Activated CD4-positive, alpha-beta T cell treated with anti-CD3 and anti-CD28 coated beads for 36 hours (primary cell): ENCODE measurements at regions of chr14 and their contacts with region 1.

Region 1: GRCh38 chr14:55373784-55374705 is 37.6 kb downstream of the ATG14 start:
- DNase-seq: peak; percentile 39
- ATAC-seq: peak; percentile 88
- H3K4me3 Mint-ChIP-seq: peak overlapping the region; percentile 45
- H3K27ac Mint-ChIP-seq: peak overlapping the region; percentile 96
- H3K4me1 Mint-ChIP-seq: peaks cover 46% of the 10 kb centered on the region
- H3K27me3 Mint-ChIP-seq: no peaks in the 10 kb centered on the region

Region 2: DNA sequence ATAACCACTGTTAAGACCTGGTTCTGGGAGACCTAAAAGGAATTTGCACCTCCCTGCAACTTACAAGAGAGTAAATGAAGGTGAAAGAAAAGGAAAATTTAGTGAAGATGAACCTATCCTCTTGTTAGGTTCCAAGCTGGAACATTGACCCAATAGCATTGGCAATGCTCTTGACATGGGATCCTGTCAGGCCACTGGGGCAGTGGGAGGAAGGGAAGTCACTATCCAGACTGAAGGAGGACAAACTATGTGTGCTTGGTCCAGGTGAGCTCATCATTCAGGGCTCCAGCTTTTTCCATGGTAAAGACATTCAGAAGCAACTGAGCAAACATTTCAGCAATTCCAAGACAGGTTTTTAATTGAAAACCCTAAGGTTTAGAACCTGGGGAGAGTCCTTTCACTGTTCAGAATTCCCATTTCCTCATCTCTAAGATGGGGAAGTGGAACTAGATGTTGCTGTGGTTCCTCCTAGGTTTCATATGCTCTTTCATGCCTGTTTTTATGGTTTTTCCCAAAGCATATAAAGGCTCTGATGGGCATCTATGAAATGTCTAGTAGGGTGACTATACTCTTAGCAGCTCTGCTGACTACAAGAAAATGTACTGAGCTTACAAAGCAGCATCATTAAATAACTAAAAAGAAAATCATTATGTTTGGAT is 289.5 kb before region 1 on chr14:
- CTCF ChIA-PET with region 1: no interaction called
- POLR2A ChIA-PET with region 1: no interaction called
- intact Hi-C with region 1: no loop called
- DNase-seq: no peak
- ATAC-seq: no peak
- H3K4me3 Mint-ChIP-seq: no peak overlapping the region
- H3K27ac Mint-ChIP-seq: no peak overlapping the region
- H3K4me1 Mint-ChIP-seq: peaks cover 2% of the 10 kb centered on the region
- H3K27me3 Mint-ChIP-seq: no peaks in the 10 kb centered on the region

Region 3: GRCh38 chr14:55303691-55304145 is 70.3 kb before region 1 on chr14:
- CTCF ChIA-PET with region 1: no interaction called
- POLR2A ChIA-PET with region 1: no interaction called
- intact Hi-C with region 1: no loop called
- DNase-seq: no peak
- ATAC-seq: no peak
- H3K4me3 Mint-ChIP-seq: no peak overlapping the region
- H3K27ac Mint-ChIP-seq: peak overlapping the region; percentile 56
- H3K4me1 Mint-ChIP-seq: peaks cover 42% of the 10 kb centered on the region
- H3K27me3 Mint-ChIP-seq: no peaks in the 10 kb centered on the region

Region 4: GRCh38 chr14:55333711-55334485 is 40.1 kb before region 1 on chr14:
- CTCF ChIA-PET with region 1: no interaction called
- POLR2A ChIA-PET with region 1: interaction called, 5 read pairs
- intact Hi-C with region 1: loop called (anchors 1 to 2 kb)
- DNase-seq: no peak
- ATAC-seq: peak; percentile 31
- H3K4me3 Mint-ChIP-seq: peak overlapping the region; percentile 16
- H3K27ac Mint-ChIP-seq: peak overlapping the region; percentile 69
- H3K4me1 Mint-ChIP-seq: peaks cover 85% of the 10 kb centered on the region
- H3K27me3 Mint-ChIP-seq: no peaks in the 10 kb centered on the region

Region 5: GRCh38 chr14:55354500-55354899 is 19.5 kb before region 1 on chr14:
- CTCF ChIA-PET with region 1: interaction called, 10 read pairs
- POLR2A ChIA-PET with region 1: no interaction called
- intact Hi-C with region 1: no loop called
- DNase-seq: peak; percentile 75
- ATAC-seq: peak; percentile 93
- H3K4me3 Mint-ChIP-seq: no peak overlapping the region
- H3K27ac Mint-ChIP-seq: peak overlapping the region; percentile 87
- H3K4me1 Mint-ChIP-seq: peaks cover 23% of the 10 kb centered on the region
- H3K27me3 Mint-ChIP-seq: no peaks in the 10 kb centered on the region

Region 6: DNA sequence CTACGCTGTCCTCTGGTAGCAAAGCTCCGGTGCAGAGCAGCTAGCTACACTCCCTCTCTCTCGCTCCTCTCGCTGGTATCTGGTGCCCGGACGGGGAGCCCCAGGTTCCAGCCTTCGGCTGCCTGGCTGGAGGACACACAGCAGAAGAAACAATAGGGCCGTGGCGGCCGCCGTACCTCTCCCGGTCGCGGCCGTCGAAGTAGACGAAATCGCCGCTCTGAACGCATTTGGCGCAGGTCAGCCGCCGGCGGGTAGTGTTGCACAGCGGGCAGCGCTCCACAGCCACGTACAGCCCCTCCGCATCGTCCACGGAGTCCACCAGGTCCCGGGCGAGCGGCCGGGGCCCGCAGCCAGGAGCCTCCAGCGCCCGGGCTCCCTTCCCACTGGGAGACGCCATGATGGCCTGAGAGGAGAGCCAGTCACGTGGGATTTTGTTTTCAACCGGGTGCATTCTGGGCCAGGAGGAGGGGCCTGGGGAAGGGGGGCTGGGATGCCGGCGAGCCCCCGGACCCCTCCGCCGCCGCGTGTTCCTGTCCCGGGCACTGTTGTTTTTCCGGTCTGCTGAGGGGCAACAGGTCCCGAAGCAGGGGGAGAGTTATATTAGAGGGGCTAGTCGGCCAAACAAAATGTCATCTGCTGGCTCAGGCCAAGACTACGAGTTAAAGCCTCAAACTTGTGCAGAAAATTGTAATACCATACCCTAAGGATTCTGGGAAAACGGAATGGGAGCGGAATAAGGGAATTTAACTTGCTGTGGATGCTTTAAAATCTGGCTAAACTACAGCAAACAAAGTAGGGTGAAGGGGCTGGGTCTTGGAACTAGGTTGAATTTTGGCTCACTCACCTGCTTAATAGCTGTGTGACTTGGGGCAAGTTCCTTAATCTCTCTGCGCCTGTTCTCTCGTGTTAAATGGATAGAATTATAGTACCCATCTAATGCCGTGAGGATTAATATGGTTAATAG is 37.7 kb after region 1 on chr14 and contains the start of gene ATG14:
- CTCF ChIA-PET with region 1: interaction called, 5 read pairs
- POLR2A ChIA-PET with region 1: no interaction called
- intact Hi-C with region 1: loop called in 1 of 2 experiments (anchors 2 kb)
- DNase-seq: peak; percentile 88
- ATAC-seq: peak; percentile 99
- H3K4me3 Mint-ChIP-seq: peak within 1 kb of the TSS; percentile 79
- H3K27ac Mint-ChIP-seq: peak within 1 kb of the TSS; percentile 82
- H3K4me1 Mint-ChIP-seq: peaks cover 27% of the 10 kb centered on the region
- H3K27me3 Mint-ChIP-seq: no peaks in the 10 kb centered on the region
- total RNA-seq, gene ATG14: 5.0 to 5.1 TPM

Region 7: GRCh38 chr14:55572578-55572977 is 198.5 kb after region 1 on chr14:
- CTCF ChIA-PET with region 1: no interaction called
- POLR2A ChIA-PET with region 1: no interaction called
- intact Hi-C with region 1: no loop called
- DNase-seq: no peak
- ATAC-seq: no peak
- H3K4me3 Mint-ChIP-seq: no peak overlapping the region
- H3K27ac Mint-ChIP-seq: no peak overlapping the region
- H3K4me1 Mint-ChIP-seq: peaks cover 10% of the 10 kb centered on the region
- H3K27me3 Mint-ChIP-seq: no peaks in the 10 kb centered on the region